GM10248 (cell line): ENCODE measurements at regions of chr3 and their contacts with region 1.

Region 1: DNA sequence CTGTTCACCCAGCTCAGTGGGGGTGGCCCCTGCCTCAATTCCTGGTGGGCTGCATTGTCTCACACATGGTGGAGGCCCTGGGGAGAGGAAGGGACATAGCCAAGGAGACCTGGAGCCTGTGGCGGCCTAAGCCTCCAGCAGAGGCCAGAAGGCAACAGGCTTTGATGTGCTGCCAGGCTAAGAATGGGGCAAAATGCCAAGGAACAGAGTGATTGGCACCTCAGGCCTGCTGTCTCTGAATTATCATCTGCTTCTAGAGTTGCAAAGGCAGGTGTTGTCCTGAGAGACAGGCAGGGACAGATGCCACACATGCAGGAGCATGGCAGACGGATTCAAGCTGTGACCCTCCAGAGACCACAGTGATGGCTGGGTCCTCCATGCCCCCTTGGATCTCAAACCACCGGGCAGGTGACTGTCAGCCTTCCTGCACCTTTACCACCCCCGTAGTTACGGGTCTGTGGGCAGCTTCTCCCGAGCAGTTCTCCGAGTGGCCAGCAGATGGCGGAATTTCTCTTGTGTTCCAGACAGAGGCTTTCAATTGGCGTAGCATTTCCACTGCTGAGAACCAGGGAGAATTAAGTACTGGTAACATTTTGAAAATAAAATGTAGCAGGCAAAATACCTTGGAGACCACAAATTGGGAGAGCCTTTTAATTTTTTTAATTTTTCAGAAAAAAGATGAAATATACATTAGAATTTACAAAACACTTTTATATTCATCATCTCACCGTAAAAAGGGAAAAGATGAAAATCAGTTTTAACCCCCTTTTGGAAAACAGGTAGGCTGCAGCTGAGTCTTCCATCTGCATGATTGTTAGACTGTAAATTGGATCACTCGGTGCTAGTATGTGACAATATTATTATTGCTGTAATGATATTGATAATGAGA is 525.5 kb upstream of the CFAP20DC start:
- DNase-seq: peak; percentile 75
- CTCF ChIP-seq: peak; percentile 92

Region 2: DNA sequence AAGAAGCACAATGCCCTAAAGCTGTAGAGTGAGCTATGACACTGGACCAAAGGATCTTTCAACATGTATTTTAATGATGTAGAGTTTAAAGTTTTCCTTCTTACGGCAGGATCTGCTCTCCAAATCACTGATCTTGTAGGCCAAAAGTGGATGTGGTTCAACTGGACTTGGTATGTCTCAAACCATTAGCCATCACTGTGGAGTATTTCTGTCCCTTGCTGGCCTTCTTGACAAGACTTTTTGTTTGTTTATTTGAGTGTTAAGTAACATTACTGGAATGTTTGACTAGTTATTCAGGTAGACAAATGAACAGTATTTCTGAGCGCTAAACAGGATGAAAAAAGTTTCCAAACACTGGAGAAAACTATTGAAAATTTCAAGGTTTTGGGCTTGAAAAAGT is 52.8 kb before region 1 on chr3:
- CTCF ChIA-PET with region 1: no interaction called
- POLR2A ChIA-PET with region 1: no interaction called
- DNase-seq: no peak
- CTCF ChIP-seq: no peak

Region 3: GRCh38 chr3:59559721-59560435 is 15.5 kb before region 1 on chr3:
- CTCF ChIA-PET with region 1: interaction called, 22 read pairs
- POLR2A ChIA-PET with region 1: no interaction called
- DNase-seq: no peak
- CTCF ChIP-seq: no peak

Region 4: GRCh38 chr3:59595830-59596229 is 20.5 kb after region 1 on chr3:
- CTCF ChIA-PET with region 1: interaction called, 37 read pairs
- POLR2A ChIA-PET with region 1: no interaction called
- DNase-seq: no peak
- CTCF ChIP-seq: no peak

Region 5: GRCh38 chr3:59759298-59760031 is 184.1 kb after region 1 on chr3:
- CTCF ChIA-PET with region 1: no interaction called
- POLR2A ChIA-PET with region 1: no interaction called
- DNase-seq: no peak
- CTCF ChIP-seq: no peak

Region 6: GRCh38 chr3:59857589-59858346 is 282.4 kb after region 1 on chr3:
- CTCF ChIA-PET with region 1: interaction called, 25 read pairs
- POLR2A ChIA-PET with region 1: no interaction called
- DNase-seq: peak; percentile 76
- CTCF ChIP-seq: peak; percentile 92

Region 7: GRCh38 chr3:61381745-61382392 is 1806.5 kb after region 1 on chr3:
- CTCF ChIA-PET with region 1: interaction called, 16 read pairs
- POLR2A ChIA-PET with region 1: no interaction called
- DNase-seq: peak; percentile 52
- CTCF ChIP-seq: peak; percentile 68